ENCODE measurements at regions of chr6 and their contacts with region 1.

Region 1: GRCh38 chr6:148177589-148178233 is 164.9 kb upstream of the SASH1 start:
- DNase-seq: peak in 41 of 42 donors; percentile 13 to 90 (median 64)

Region 2: GRCh38 chr6:148074738-148075137 is 103.0 kb before region 1 on chr6:
- intact Hi-C with region 1: no loop called
- DNase-seq: no peak

Region 3: DNA sequence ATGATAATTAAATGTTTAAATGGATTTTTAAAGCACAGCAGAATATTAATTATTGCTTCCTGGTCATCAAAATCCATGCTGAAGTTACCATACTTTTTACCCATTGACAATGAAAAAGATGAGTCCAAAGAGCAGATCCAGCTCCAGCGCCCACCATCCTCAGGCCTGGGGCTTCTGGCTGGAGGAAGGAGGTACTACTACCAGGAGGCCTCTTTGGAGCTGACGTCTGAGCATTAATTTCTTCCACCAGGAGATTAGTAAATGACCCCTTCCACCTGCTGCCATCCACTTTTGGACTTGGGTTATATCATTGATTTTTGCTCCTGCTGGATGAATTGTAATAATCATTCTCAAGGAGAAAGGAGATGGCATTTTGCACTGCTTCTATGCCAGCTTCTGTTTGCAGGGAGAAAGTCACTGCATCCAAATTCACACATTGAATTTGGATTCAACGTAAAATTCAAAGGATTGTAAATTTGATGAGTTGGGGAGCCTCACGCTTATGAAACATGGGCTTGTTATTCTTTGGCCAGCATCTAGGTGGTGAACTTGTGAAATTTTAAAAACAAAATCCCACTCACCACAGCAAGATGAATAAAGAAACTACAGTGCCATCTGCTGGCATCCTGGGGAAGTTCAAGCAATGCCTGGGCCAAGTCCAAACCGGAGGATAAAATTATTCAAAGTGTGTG is 286.8 kb after region 1 on chr6:
- intact Hi-C with region 1: loop called (anchors 5 kb)
- DNase-seq: peak; percentile 31 to 93 (median 78)